ENCODE measurements at regions of chr9 and their contacts with region 1.

Region 1: DNA sequence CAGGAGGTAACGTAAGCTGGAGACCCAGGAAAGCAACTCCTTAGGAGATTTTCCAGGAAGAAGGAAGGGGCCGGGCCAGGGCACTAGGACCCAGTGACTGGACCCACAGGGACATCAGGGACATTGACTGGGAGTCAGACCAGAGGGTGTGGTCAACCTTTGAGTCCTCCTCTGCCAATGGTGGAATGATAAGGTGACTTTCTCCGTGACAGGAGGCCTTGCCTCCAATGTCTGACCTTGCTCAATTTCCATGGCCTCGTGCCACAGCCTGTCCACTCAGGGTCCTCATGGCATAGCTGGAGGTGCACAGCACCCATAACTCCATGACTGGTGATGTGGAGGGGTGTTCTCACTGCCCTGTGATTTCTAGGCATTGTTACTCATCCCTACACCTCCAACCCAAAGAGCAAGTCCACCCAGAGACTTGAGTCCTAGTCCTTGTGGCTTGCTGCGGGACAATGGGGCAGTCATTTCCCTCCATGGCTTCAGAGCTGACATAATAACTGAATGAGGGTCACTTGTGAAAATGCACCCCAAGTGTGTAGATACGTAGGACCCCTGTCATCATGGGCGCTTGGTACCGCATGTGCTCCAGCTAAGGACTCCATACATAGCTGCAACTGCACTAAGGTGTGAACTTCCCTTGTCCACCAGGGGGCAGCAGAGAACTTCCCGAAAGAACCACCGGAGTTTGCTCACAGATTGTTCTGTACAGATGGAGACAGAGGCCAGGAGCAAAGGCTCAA is 4.1 kb upstream of the AMBP start:
- DNase-seq: peak; percentile 72
- H3K4me3 ChIP-seq: no peak overlapping the region
- H3K27ac ChIP-seq: no peak overlapping the region
- H3K4me1 ChIP-seq: no peaks in the 10 kb centered on the region
- H3K27me3 ChIP-seq: no peaks in the 10 kb centered on the region
- CTCF ChIP-seq: peak; percentile 91 to 92

Region 2: DNA sequence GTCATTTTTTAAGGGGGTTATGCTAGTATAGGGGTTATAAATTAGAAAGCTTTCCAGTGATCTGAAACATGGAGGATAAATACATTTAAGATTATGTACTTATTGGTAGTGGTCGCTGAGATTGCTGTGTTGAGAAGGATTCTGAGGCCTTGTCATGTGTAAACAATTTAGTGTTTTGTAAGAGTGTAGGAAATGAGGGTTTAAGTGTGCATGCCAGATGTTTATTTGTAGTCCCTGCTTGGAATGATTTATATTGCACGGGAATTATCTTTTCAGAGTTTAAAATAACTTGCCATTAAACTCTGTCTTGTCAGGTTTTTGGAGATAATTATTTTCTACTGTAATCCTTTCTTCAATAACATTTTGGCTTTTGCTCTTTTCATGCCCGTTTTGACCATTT is 186.7 kb before region 1 on chr9:
- CTCF ChIA-PET with region 1: no interaction called
- dilution Hi-C with region 1: no loop called
- in situ Hi-C with region 1: no loop called
- intact Hi-C with region 1: no loop called
- DNase-seq: no peak
- H3K4me3 ChIP-seq: no peak overlapping the region
- H3K27ac ChIP-seq: no peak overlapping the region
- H3K4me1 ChIP-seq: no peaks in the 10 kb centered on the region
- H3K27me3 ChIP-seq: no peaks in the 10 kb centered on the region
- CTCF ChIP-seq: no peak

Region 3: GRCh38 chr9:114004221-114004716 is 77.9 kb before region 1 on chr9:
- CTCF ChIA-PET with region 1: no interaction called
- dilution Hi-C with region 1: loop called (anchors 5 kb)
- in situ Hi-C with region 1: no loop called
- intact Hi-C with region 1: no loop called
- DNase-seq: no peak
- H3K4me3 ChIP-seq: no peak overlapping the region
- H3K27ac ChIP-seq: no peak overlapping the region
- H3K4me1 ChIP-seq: no peaks in the 10 kb centered on the region
- H3K27me3 ChIP-seq: no peaks in the 10 kb centered on the region
- CTCF ChIP-seq: no peak

Region 4: DNA sequence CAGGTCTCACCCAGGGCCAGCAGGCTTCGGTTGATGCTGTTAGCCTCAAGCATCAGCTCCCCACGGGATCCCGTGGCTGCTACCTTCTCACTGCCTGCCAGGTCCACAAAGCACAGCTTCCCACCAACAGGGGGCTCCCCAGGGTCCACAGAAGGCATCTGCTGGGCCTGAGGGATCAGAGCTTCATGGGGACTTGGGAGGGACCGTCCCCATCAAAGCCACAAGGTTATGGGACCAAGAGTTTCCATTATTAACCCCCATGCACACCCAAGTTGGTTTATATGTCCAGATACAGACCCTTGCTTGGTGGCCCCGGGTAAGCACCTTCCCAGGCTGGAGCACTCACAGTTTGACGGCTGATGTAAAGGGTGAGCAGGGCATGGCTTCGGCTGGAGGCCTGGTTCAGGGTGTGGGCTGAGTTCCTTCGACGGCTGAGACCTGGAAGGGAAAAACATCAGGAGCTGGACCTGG is 13.9 kb after region 1 on chr9:
- CTCF ChIA-PET with region 1: no interaction called
- dilution Hi-C with region 1: no loop called
- in situ Hi-C with region 1: no loop called
- intact Hi-C with region 1: loop called (anchors 2 kb)
- DNase-seq: no peak
- H3K4me3 ChIP-seq: no peak overlapping the region
- H3K27ac ChIP-seq: no peak overlapping the region
- H3K4me1 ChIP-seq: peaks cover 9% of the 10 kb centered on the region
- H3K27me3 ChIP-seq: no peaks in the 10 kb centered on the region
- CTCF ChIP-seq: no peak

Region 5: DNA sequence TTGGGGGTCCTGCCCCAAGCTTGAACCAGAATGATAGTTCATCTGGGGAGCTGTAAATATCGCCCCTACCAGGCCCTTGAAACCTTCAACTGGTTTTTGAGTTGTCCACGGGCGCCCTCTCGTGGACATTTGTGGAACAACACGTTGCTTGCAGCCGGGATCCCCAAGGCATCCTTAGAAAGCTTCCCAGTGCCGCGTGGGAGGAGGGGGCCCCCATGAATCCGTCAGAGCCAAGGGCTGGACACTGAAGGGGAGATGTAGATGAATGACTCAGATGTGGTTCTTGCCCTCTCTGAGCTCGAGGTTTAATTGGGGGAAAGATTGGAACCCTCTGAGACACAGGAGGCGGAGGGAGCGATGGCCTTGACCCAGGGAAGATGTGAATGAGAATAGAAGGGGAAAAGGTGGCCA is 208.9 kb after region 1 on chr9:
- CTCF ChIA-PET with region 1: interaction called, 3 read pairs
- dilution Hi-C with region 1: no loop called
- in situ Hi-C with region 1: no loop called
- intact Hi-C with region 1: loop called (anchors 1 kb)
- DNase-seq: peak; percentile 50
- H3K4me3 ChIP-seq: no peak overlapping the region
- H3K27ac ChIP-seq: no peak overlapping the region
- H3K4me1 ChIP-seq: peaks cover 20% of the 10 kb centered on the region
- H3K27me3 ChIP-seq: no peaks in the 10 kb centered on the region
- CTCF ChIP-seq: peak; percentile 82 to 84

Region 6: DNA sequence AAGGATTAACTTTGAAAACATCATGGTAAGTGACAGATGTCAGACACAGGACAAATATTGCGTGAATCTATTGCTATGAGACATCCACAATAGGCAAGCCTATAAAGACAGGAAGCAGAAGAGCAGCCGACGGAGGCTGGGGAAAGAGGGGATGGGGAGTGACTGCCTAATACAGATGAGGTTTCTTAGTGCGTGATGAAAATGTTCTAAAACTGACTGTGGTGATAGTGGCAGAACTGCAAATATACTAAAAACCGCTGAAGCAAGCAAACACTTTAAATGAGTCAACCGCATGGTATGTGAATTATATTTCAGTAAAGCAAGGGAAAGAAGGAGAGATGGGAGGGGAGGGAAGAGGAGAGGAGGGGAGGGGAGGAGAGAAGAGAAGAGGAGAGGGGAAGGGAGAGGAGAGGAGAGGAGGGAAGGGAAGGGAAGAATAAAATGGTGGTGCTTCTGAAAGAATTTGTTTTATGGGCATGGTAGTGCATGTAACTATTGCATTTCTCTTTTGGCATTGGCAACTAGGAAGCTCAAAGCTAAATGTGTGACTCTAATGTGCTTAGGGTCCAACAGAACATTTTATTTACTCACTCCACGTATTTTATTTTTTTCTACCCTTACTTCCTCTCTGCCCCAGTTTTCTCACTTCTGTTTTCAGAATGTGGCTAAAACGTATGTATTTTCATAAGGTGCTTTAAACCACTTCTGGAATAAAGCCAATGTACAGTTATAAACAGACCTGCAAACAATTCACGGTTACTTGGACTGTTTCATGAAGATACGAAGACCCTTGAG is 284.3 kb after region 1 on chr9:
- CTCF ChIA-PET with region 1: no interaction called
- dilution Hi-C with region 1: no loop called
- in situ Hi-C with region 1: no loop called
- intact Hi-C with region 1: no loop called
- DNase-seq: peak; percentile 21
- H3K4me3 ChIP-seq: no peak overlapping the region
- H3K27ac ChIP-seq: no peak overlapping the region
- H3K4me1 ChIP-seq: peaks cover 18% of the 10 kb centered on the region
- H3K27me3 ChIP-seq: no peaks in the 10 kb centered on the region
- CTCF ChIP-seq: no peak